Transverse colon (tissue), 4 donors: ENCODE measurements at regions of chr17 and their contacts with region 1.

Region 1: GRCh38 chr17:81638668-81639067 is 1.7 kb downstream of the TSPAN10 start:
- DNase-seq: no peak
- H3K4me3 ChIP-seq: no peak overlapping the region
- H3K27ac ChIP-seq: no peak overlapping the region
- H3K4me1 ChIP-seq: peaks cover 13 to 29% (median 19%) of the 10 kb centered on the region in 4 donors
- H3K27me3 ChIP-seq: no peaks in the 10 kb centered on the region
- CTCF ChIP-seq: no peak
- EP300 ChIP-seq: no peak
- POLR2A ChIP-seq: no peak

Region 2: GRCh38 chr17:81687770-81688541 is 49.3 kb after region 1 on chr17:
- in situ Hi-C with region 1: no loop called
- intact Hi-C with region 1: loop called (anchors 2 kb)
- DNase-seq: no peak
- H3K4me3 ChIP-seq: no peak overlapping the region
- H3K27ac ChIP-seq: no peak overlapping the region
- H3K4me1 ChIP-seq: peaks cover 12 to 17% (median 15%) of the 10 kb centered on the region in 4 donors
- H3K27me3 ChIP-seq: no peaks in the 10 kb centered on the region
- CTCF ChIP-seq: no peak
- EP300 ChIP-seq: no peak
- POLR2A ChIP-seq: no peak